Activated CD4-positive, alpha-beta T cell treated with anti-CD3 and anti-CD28 coated beads for 36 hours (primary cell): ENCODE measurements at regions of chr3 and their contacts with region 1.

Region 1: DNA sequence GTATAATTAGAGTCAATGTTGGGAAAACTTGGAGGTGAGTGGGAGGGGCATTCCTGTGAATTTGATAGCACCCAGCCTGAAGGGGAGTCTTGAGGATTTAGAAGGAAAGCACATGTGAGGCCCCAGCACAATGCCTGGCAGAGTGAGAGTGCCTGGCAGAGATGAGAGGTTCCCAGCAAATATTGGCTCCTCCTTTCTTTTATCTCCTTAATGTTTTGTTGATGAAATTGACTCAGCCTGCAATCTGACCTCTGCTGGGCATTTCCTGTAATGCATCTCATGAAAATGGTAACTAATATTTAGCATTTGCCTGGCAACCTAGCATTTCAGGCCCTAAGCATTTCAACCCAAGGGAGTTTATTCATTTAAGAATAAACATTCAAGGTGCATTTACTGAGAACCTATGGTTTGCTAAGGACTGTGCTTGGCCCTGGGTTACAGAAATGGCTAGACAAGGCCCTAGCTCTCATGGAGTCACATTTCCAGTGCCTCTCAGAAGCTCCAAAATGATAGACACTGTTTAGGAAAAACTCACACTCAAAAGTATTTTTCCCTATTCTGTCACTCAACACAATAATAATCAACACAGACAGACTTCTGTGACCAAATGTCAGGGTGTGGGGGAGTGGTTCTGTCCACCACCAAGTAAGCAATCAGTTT is 19.0 kb downstream of the PDHB start:
- DNase-seq: peak; percentile 56
- ATAC-seq: peak; percentile 85
- H3K4me3 Mint-ChIP-seq: no peak overlapping the region
- H3K27ac Mint-ChIP-seq: no peak overlapping the region
- H3K4me1 Mint-ChIP-seq: peaks cover 4% of the 10 kb centered on the region
- H3K27me3 Mint-ChIP-seq: no peaks in the 10 kb centered on the region

Region 2: DNA sequence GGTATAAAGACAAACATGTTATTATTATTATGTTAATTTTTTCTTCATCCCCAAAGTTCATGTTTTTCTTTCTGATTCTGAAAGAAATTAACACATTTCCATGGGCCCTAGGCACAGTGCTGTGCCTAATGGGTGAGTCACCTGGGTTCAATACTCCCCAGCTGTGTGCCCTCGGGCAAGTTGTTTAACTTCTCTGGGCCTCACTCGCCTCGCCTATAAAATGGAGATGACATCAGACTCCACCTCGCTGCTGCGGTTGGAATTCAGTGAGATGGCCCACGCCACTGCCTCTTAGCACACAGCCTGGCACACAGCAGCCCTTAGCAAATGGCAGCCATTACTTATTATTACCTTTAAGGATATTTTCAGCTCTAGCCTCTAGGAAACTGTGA is 226.5 kb before region 1 on chr3:
- CTCF ChIA-PET with region 1: interaction called, 3 read pairs
- POLR2A ChIA-PET with region 1: no interaction called
- intact Hi-C with region 1: loop called in 1 of 2 experiments (anchors 1 kb)
- DNase-seq: no peak
- ATAC-seq: peak; percentile 63
- H3K4me3 Mint-ChIP-seq: no peak overlapping the region
- H3K27ac Mint-ChIP-seq: no peak overlapping the region
- H3K4me1 Mint-ChIP-seq: no peaks in the 10 kb centered on the region
- H3K27me3 Mint-ChIP-seq: no peaks in the 10 kb centered on the region

Region 3: GRCh38 chr3:58324391-58325390 is 90.0 kb before region 1 on chr3:
- CTCF ChIA-PET with region 1: interaction called, 23 read pairs
- POLR2A ChIA-PET with region 1: interaction called, 4 read pairs
- intact Hi-C with region 1: loop called (anchors 1 kb)
- DNase-seq: no peak
- ATAC-seq: peak; percentile 62
- H3K4me3 Mint-ChIP-seq: peak overlapping the region; percentile 29
- H3K27ac Mint-ChIP-seq: peak overlapping the region; percentile 86
- H3K4me1 Mint-ChIP-seq: peaks cover 40% of the 10 kb centered on the region
- H3K27me3 Mint-ChIP-seq: no peaks in the 10 kb centered on the region

Region 4: GRCh38 chr3:58332575-58333188 is 82.0 kb before region 1 on chr3 and contains the start of gene PXK:
- CTCF ChIA-PET with region 1: interaction called, 6 read pairs
- POLR2A ChIA-PET with region 1: no interaction called
- intact Hi-C with region 1: loop called in 1 of 2 experiments (anchors 1 kb)
- DNase-seq: peak; percentile 89
- ATAC-seq: peak; percentile 84
- H3K4me3 Mint-ChIP-seq: peak within 1 kb of the TSS; percentile 100
- H3K27ac Mint-ChIP-seq: peak within 1 kb of the TSS; percentile 96
- H3K4me1 Mint-ChIP-seq: peaks cover 30% of the 10 kb centered on the region
- H3K27me3 Mint-ChIP-seq: no peaks in the 10 kb centered on the region
- total RNA-seq, gene PXK: 35.2 to 50.7 TPM

Region 5: GRCh38 chr3:58356054-58356453 is 58.6 kb before region 1 on chr3:
- CTCF ChIA-PET with region 1: interaction called, 3 read pairs
- POLR2A ChIA-PET with region 1: no interaction called
- intact Hi-C with region 1: loop called in 1 of 2 experiments (anchors 2 kb)
- DNase-seq: no peak
- ATAC-seq: no peak
- H3K4me3 Mint-ChIP-seq: no peak overlapping the region
- H3K27ac Mint-ChIP-seq: no peak overlapping the region
- H3K4me1 Mint-ChIP-seq: peaks cover 46% of the 10 kb centered on the region
- H3K27me3 Mint-ChIP-seq: no peaks in the 10 kb centered on the region

Region 6: DNA sequence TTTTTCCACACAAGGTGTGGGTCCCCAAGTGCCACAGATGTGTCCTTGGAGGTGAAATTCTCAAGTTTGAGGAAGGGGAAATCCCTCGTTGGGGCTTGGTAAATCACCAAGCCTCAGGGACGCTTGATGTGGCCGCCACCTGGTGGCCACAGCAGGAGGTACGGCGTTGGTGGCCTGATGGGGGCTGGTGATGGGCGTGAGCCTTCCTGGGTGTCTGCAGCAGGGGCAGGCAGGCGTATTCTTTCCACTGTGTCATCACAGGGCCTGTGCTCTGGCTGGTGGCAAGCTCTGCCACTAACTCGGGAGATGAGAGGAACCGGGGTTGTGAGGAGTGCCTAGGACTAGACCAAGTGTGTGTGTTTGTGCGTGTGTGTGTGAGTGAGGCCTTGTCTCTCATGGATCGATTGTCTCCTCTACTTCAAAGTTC is 118.1 kb after region 1 on chr3:
- CTCF ChIA-PET with region 1: interaction called, 3 read pairs
- POLR2A ChIA-PET with region 1: no interaction called
- intact Hi-C with region 1: loop called in 1 of 2 experiments (anchors 5 kb)
- DNase-seq: peak; percentile 92
- ATAC-seq: peak; percentile 97
- H3K4me3 Mint-ChIP-seq: no peak overlapping the region
- H3K27ac Mint-ChIP-seq: peak overlapping the region; percentile 67
- H3K4me1 Mint-ChIP-seq: peaks cover 13% of the 10 kb centered on the region
- H3K27me3 Mint-ChIP-seq: no peaks in the 10 kb centered on the region